Activated T-helper 1 cell treated with anti-CD3 and anti-CD28 coated beads, Interleukin-12 subunit alpha, Interleukin-12 subunit beta, Interleukin-2, Interleukin-4 antibody, amounts not matched to agents 30 ng/mL and 10 ng/mL and 1 ng/mL, durations not matched to agents 14 hours and 24 hours and 36 hours (primary cell): ENCODE measurements at regions of chr10 and their contacts with region 1.

Region 1: DNA sequence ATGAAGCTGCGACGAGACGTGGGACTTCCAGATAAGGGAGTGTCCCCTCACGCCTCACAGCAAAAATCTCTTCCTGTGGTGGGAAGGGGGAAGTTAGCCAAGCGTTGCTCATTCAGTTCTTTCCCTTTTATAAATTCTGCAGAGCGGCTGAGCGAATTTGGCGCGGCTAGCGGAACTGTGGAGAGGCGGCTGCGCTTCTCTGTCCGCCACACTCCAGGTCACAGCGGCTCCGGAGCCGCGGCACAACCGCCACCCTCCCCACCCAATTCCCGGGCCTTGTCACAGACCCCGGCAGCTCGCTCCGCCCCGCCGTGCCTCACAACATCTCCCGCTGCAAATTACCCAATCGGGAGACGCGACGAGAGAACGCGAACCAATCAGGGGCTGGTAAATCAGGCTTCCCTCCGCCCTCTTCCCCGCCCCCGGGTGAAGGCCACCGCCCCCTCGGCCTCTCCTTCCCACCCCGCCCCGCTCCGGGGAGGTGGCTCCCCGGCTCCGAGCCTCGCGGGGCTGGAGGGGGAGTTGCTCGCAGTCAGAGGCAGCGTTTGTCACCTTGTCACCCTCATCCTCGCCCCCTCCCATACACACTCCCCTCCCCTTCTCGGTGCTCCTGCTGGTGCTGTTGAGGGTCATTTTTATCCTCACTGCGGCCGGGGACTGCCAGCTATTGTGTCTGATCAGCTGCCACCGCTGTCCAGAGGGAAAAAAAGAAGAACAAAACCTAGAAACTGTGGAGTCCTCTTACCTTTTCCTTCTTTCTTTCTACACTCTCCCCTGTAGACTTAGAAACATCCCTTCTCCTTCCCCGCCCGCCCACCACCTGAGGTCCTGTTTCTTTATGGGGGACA is 918 bp upstream of the ARHGAP21 start:
- DNase-seq: peak; percentile 92
- H3K4me3 Mint-ChIP-seq: peak overlapping the region; percentile 93
- H3K27ac Mint-ChIP-seq: peak overlapping the region; percentile 96
- H3K4me1 Mint-ChIP-seq: peaks cover 29% of the 10 kb centered on the region
- H3K27me3 Mint-ChIP-seq: no peaks in the 10 kb centered on the region

Region 2: DNA sequence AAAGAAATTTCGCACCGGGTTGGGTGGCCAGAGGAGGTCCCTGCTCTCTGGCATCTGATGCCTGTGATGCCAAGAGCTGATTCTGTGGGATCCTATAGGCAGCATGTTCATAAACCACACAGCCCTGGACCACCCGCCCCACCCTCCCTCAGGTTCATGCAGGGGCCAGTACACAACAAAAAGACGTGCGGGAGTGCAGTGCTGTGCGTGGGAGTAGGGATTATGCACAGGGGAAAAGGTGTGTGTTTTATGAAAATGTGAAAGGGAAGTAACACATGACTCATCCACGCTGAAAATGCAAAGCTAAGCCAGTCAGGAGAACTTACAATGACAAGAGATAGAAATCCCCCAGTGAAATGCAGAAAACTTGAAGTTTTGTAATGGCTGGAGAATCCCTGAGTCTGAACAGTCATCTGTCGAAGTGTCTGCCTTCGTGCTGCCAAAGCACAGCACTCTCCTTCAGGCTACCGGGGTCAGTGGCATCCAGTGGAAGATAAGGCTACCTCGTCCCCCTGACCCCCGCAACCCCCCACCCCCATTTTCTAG is 514.6 kb before region 1 on chr10:
- intact Hi-C with region 1: loop called (anchors 5 kb)
- DNase-seq: peak; percentile 8
- H3K4me3 Mint-ChIP-seq: peak overlapping the region; percentile 83
- H3K27ac Mint-ChIP-seq: peak overlapping the region; percentile 90
- H3K4me1 Mint-ChIP-seq: peaks cover 39% of the 10 kb centered on the region
- H3K27me3 Mint-ChIP-seq: peaks cover 24% of the 10 kb centered on the region

Region 3: DNA sequence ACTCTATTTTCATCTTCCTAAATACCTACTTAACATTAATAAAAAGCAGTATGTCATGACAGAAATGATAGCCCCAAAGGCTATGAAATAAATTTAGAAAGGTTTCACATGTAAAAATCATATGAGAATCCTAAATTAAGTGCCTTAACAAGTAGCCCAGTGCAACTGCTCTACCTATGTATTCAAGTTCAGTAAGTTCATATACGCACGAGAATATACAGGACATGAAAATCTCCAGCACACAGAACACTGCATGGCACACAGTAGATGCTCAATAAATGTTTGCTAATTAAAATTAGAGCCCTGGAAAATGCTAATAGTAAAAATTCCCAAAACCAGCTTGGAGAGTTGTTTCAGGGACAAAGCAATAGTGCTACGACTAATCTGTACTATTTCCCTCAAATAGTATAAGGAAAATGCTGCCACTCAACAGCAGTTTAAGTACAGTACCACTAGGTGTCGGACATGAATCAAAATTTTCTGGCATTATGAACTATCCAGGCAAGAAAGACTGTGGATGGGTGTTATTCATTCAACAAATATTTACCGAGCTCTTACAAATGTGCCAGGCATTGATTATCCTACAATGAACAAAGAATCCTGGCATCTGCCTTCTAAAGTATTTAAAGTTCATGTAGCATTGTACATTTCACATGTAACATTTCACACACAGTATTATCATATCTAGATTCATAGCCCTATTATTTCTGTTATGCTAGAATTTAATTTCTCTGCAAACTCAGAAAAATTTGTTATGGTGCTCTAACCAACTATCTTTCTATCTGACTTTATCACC is 81.8 kb before region 1 on chr10:
- intact Hi-C with region 1: loop called (anchors 1 kb)
- DNase-seq: no peak
- H3K4me3 Mint-ChIP-seq: no peak overlapping the region
- H3K27ac Mint-ChIP-seq: no peak overlapping the region
- H3K4me1 Mint-ChIP-seq: no peaks in the 10 kb centered on the region
- H3K27me3 Mint-ChIP-seq: no peaks in the 10 kb centered on the region

Region 4: GRCh38 chr10:24669285-24669852 is 55.2 kb before region 1 on chr10:
- intact Hi-C with region 1: no loop called
- DNase-seq: no peak
- H3K4me3 Mint-ChIP-seq: no peak overlapping the region
- H3K27ac Mint-ChIP-seq: no peak overlapping the region
- H3K4me1 Mint-ChIP-seq: peaks cover 8% of the 10 kb centered on the region
- H3K27me3 Mint-ChIP-seq: no peaks in the 10 kb centered on the region

Region 5: DNA sequence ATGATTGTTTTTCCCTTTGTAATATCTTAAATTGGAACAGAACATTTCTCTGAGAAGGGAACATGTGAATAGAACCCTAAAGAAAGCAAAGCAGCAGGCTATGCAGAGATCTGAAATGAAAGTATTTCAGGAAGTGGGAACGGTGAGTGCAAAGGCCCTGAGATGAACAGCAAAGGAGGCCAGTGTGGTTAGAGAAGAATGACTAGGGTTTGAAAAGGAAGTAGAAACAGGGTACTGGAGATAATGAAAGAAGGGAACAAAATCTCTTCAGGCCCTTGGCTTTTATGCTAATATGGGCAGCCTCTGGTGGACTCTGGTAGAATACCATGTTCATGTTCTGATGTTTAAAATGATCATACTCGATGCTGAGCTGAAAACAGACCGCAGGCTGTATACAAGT is 23.2 kb before region 1 on chr10:
- intact Hi-C with region 1: no loop called
- DNase-seq: no peak
- H3K4me3 Mint-ChIP-seq: peak overlapping the region; percentile 12
- H3K27ac Mint-ChIP-seq: peak overlapping the region; percentile 55
- H3K4me1 Mint-ChIP-seq: peaks cover 27% of the 10 kb centered on the region
- H3K27me3 Mint-ChIP-seq: no peaks in the 10 kb centered on the region

Region 6: DNA sequence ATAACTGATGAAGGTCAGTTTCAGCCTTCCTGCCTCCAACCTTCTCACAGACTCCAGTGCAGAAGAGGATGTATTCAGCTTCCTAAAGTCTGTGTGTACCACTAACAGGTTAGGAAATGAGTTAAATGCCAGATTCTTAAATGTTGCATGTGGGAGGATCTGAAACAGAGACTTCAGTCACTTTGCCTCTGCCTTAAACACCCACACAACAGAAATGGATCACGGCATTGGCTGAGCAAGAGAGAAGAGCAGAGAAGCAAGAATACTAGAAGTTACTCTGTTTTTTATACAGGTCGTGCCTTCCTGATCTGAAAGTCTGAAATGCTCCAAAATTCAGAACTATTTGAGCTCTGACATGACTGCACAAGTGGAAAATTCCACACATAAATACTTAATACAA is 98.0 kb after region 1 on chr10:
- intact Hi-C with region 1: loop called (anchors 2 kb)
- DNase-seq: no peak
- H3K4me3 Mint-ChIP-seq: no peak overlapping the region
- H3K27ac Mint-ChIP-seq: no peak overlapping the region
- H3K4me1 Mint-ChIP-seq: peaks cover 40% of the 10 kb centered on the region
- H3K27me3 Mint-ChIP-seq: peaks cover 2% of the 10 kb centered on the region

Region 7: DNA sequence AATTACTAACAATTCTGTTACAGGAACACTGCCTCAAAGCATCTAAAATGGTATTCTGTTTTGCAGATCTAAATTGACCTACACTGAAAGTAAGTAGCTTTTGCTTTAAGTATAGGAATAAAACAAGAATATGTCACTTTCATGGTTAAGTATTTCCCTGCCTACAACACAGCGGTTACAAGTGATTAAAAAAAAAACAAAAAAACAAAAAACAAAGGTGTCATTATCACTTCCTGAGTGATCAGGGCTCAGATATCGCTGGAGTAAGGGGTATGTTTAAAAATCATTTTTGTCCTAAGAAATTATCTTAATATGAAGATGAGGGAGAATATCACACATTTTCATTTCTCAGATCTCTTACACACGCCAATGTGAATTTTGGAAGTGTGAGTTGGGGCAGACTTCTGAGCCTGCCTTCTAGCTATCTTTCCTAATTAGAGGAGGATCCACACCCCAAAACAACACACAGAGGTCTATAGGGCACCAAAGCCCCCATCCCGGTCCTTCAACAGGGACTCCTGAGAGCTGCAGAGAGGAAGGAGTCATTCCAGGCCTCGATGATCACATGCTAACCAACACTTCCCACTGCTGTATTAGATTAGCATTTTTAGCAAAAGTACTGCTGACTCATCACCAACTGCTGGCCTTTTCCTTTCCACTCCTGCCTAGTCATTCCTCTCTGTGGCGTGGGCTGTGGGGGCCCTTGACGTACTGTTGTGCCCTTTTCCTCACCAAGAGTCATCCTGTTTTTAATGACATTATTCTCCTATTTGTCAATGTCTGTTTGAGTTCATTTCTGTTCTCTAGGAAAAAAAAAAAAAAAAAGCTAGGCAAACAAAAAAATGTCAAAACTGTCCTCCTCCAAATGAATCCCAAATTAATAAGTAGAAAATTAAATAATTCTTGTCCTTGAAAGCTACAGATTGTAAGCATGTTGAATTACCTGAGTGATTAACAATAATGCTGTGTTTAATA is 196.6 kb after region 1 on chr10:
- intact Hi-C with region 1: loop called (anchors 1 kb)
- DNase-seq: peak; percentile 33
- H3K4me3 Mint-ChIP-seq: peak overlapping the region; percentile 53
- H3K27ac Mint-ChIP-seq: peak overlapping the region; percentile 92
- H3K4me1 Mint-ChIP-seq: peaks cover 30% of the 10 kb centered on the region
- H3K27me3 Mint-ChIP-seq: no peaks in the 10 kb centered on the region

Region 8: DNA sequence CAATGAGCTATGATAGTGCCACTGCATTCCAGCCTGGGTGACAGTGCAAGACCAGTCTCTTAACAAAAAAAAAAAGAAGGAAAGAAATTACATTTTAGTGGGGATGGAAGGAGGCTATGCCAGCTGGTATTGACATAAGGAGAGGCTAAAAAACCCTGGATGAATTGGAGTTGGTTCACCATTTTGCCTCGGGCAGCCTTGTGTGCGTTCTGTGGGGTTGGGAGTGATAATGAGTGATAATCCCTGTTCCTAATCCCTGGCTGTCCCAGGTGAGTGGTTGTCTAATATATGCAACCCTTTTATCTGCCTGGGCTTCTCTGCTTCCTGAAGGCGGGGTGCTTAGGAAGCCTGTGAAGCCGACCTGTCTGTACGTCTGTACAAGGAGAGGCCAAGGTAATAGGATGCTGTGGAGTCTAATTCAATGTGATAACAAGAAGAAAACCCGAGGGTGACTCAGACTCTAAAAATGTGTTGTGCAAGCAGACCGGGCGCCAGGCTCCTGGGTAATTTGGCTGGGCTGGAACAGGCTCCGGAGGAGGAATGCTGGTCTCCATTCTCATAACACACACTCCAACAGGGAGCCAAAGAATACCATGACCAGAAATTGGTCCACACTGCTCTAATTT is 335.3 kb after region 1 on chr10:
- intact Hi-C with region 1: loop called (anchors 2 kb)
- DNase-seq: no peak
- H3K4me3 Mint-ChIP-seq: no peak overlapping the region
- H3K27ac Mint-ChIP-seq: no peak overlapping the region
- H3K4me1 Mint-ChIP-seq: peaks cover 30% of the 10 kb centered on the region
- H3K27me3 Mint-ChIP-seq: no peaks in the 10 kb centered on the region